Posterior cingulate gyrus (tissue), 11 donors: ENCODE measurements at regions of chr9 and their contacts with region 1.

Region 1: DNA sequence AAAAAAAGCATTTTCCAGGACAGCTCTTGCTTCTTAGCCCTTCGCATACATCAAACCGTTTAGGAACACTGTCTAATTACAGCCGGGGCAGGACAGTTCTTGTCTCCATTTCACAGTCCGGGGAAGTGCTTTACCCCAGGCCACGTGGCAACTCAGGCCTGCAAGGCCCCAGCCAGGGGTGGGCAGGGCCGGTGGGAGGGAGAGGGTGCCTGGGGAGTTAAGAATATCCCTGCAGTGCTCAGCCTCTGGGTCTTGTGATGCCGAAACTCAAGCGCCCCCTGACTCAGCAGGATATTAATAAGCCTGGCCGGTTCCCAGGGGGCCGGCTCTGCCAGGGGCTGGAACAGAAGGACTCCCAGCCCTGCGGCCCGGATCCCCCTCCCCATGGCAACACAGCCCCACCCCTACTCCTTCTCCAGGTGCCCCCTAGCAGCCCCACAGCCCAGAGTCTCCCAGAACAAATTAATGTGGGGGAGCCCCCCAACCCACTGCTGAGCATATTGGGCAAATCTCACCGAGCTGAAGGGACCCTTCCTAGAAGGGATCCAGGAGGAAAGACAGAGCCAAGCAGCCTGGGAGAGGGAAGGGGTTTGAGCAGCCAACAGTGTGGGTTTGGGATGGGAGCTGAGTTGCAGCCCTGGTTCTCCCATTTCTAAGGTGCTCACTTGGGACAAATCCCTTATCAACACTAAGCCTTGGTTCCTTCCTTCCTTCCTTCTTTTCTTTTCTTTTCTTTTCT is 45.3 kb downstream of the PLPP7 start:
- DNase-seq: peak in 3 of 10 donors; percentile 47 to 75 (median 62)

Region 2: DNA sequence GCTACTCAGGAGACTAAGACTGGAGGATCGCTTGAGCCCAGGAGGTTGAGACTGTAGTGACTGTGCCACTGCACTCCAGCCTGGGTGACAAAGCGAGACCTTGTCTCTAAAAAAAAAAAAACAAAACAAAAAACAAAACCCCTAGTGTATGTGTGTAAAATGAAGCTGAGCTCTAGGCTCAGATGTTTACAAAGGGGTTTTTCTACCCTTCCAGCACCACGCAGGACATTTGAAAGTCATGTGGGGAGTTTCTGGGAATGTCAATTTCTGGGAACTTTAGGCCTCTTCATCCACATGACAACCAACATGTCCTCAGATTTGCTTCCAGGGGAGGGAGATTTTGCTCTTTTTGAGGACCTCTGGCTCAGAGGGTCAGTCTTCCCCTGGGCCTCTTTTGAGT is 280.9 kb before region 1 on chr9:
- intact Hi-C with region 1: loop called (anchors 2 kb)
- DNase-seq: peak in 2 of 10 donors; percentile 11 to 26

Region 3: DNA sequence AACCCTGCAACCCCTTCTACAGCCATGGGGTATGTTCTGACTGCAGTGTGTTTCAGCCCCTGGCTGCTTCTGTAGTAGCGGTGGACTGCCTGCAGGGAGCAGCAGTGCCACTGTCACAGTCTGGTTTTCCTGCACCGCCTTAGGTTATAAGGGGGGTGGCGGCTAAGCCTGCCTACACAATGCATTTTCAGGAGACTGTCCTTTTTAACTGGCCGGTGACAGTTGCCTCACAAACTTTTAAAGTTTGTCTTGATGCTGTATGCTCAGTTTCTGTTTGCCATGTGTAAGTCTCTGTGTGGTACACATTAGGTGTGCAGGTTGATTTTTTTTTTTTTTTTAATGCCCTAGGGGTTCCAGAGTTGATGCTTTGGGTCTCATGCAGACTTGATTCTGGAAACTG is 156.4 kb before region 1 on chr9:
- intact Hi-C with region 1: loop called (anchors 1 kb)
- DNase-seq: peak; percentile 51 to 95 (median 74)

Region 4: GRCh38 chr9:131270171-131271015 is 64.4 kb before region 1 on chr9:
- intact Hi-C with region 1: no loop called
- DNase-seq: peak in 2 of 10 donors; percentile 37 to 89

Region 5: DNA sequence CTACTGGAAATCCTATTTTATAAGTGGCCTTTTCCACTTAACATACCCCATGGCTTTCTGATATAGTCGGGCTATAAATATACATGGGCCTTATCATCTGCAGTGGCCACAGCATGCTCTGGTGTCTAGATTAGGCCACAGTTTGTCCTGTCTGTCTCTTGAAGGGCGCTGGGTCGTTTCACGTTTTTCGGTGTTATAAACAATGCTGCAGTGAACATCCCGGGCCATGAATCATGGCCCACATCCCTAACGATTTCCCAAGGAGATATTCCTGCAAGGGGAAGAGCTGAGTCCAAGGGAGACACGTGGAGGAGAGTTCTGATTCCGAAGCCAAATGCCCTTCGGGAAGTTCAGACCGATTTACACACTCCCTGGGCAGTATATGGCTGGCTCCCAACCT is 36.9 kb before region 1 on chr9:
- intact Hi-C with region 1: no loop called
- DNase-seq: no peak